Activated CD4-positive, alpha-beta memory T cell treated with anti-CD3 and anti-CD28 coated beads for 36 hours (primary cell): ENCODE measurements at regions of chr10 and their contacts with region 1.

Region 1: DNA sequence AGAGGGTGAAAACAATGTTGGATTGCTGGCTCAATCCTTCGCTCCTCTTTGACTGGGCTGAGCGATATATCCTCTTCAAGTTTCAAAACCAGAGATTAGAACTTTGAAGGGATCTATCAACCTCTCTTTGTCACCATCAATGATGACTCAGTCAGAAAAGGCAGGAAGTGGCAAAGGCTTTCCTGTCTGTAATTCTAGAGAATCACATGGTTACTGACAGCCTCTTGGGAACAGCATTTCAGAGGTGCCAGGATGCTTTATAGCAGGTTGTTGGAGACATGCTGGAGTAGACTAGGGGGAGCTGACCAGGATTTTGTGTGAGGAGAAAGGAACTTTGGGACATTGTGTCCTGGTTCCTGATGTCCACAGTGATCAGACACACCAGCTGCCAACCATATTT is 81.3 kb downstream of the PRKCQ start:
- DNase-seq: peak; percentile 55
- H3K4me3 Mint-ChIP-seq: peak overlapping the region; percentile 36
- H3K27ac Mint-ChIP-seq: peak overlapping the region; percentile 93
- H3K4me1 Mint-ChIP-seq: peaks cover 53% of the 10 kb centered on the region
- H3K27me3 Mint-ChIP-seq: no peaks in the 10 kb centered on the region

Region 2: GRCh38 chr10:6473901-6474370 is 24.8 kb before region 1 on chr10:
- CTCF ChIA-PET with region 1: interaction called, 4 read pairs
- POLR2A ChIA-PET with region 1: interaction called, 8 read pairs
- intact Hi-C with region 1: loop called (anchors 1 kb)
- DNase-seq: peak; percentile 54
- H3K4me3 Mint-ChIP-seq: peak overlapping the region; percentile 73
- H3K27ac Mint-ChIP-seq: peak overlapping the region; percentile 93
- H3K4me1 Mint-ChIP-seq: peaks cover 48% of the 10 kb centered on the region
- H3K27me3 Mint-ChIP-seq: no peaks in the 10 kb centered on the region

Region 3: GRCh38 chr10:6514844-6515780 is 16.3 kb after region 1 on chr10:
- CTCF ChIA-PET with region 1: interaction called, 3 read pairs
- POLR2A ChIA-PET with region 1: interaction called, 3 read pairs
- intact Hi-C with region 1: loop called (anchors 1 kb)
- DNase-seq: no peak
- H3K4me3 Mint-ChIP-seq: no peak overlapping the region
- H3K27ac Mint-ChIP-seq: peak overlapping the region; percentile 14
- H3K4me1 Mint-ChIP-seq: peaks cover 85% of the 10 kb centered on the region
- H3K27me3 Mint-ChIP-seq: no peaks in the 10 kb centered on the region